Adrenal gland (tissue), 19 donors: ENCODE measurements at regions of chr11 and their contacts with region 1.

Region 1: GRCh38 chr11:45102810-45103621 is 43.4 kb upstream of the PRDM11 start:
- DNase-seq: peak; percentile 54 to 78 (median 63)
- H3K4me3 ChIP-seq: no peak overlapping the region
- H3K27ac ChIP-seq: no peak overlapping the region
- H3K4me1 ChIP-seq: peaks cover 0 to 9% of the 10 kb centered on the region in 2 donors
- H3K27me3 ChIP-seq: no peaks in the 10 kb centered on the region
- CTCF ChIP-seq: peak; percentile 93 to 99 (median 96)
- POLR2A ChIP-seq: no peak

Region 2: DNA sequence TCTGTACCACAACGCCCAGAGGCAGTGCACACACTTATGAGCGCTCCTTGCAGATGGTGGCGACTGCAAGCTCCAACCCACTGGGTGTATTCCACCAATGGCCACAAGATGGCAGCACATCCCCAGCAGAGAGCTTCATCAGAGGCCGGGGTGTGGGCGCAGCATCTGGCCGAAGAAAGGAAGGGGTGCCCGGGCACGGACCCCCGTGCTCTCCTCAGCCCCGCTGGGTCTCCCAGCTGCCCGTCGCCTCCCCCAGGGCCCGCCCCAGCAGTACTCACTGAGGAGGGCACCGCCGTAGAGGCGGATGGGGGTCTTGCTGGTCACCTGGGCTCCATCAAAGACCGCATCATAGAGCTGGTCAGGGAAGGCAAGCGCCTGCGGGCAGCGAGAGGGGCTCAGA is 166.5 kb before region 1 on chr11:
- intact Hi-C with region 1: loop called (anchors 2 kb)
- DNase-seq: peak; percentile 76 to 95 (median 86)
- H3K4me3 ChIP-seq: no peak overlapping the region
- H3K27ac ChIP-seq: no peak overlapping the region
- H3K4me1 ChIP-seq: no peaks in the 10 kb centered on the region
- H3K27me3 ChIP-seq: no peaks in the 10 kb centered on the region
- CTCF ChIP-seq: peak; percentile 89 to 98 (median 96)
- POLR2A ChIP-seq: no peak